ENCODE measurements at regions of chr5 and their contacts with region 1.

Region 1: DNA sequence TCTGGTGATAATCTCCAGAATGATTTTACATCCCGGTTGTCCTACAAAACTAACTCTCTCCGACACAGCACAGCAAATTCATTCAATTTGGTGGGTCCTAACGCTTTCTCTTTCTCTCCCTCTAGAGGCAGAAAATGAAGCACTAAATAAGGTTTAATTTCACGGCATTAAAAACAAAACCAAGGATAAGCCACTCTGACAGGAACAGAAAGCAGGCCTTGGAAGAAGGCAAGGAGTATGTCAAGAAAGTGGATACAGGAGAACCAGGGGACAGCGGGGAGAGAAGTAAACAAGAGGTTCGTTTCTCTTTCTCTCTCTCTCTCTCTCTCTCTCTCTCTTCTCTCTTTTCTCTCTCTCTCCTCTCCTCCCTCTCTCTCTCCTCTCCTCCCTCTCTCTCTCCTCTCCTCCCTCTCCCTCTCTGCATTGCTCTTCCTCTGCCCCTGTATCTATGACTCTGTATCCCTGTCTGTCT is 49.8 kb downstream of the EBF1 start:
- DNase-seq: no peak
- ATAC-seq: peak; percentile 51 to 57
- H3K4me3 ChIP-seq: peak overlapping the region; percentile 18 to 50 (median 32)
- H3K27ac ChIP-seq: peak overlapping the region; percentile 73 to 83 (median 79)
- H3K4me1 ChIP-seq: peaks cover 8 to 46% of the 10 kb centered on the region in 2 donors
- H3K27me3 ChIP-seq: peaks cover 0 to 8% (median 0%) of the 10 kb centered on the region in 3 donors
- CTCF ChIP-seq: peak in 3 of 5 experiments; percentile 17 to 48 (median 42)
- POLR2A ChIP-seq: no peak

Region 2: GRCh38 chr5:158875272-158875679 is 174.6 kb before region 1 on chr5:
- in situ Hi-C with region 1: no loop called
- intact Hi-C with region 1: loop called (anchors 10 kb)
- DNase-seq: no peak
- ATAC-seq: peak; percentile 24 to 39
- H3K4me3 ChIP-seq: peak overlapping the region in 3 of 4 donors; percentile 4 to 31 (median 4)
- H3K27ac ChIP-seq: peak overlapping the region; percentile 41 to 61 (median 52)
- H3K4me1 ChIP-seq: peaks cover 10 to 13% of the 10 kb centered on the region in 2 donors
- H3K27me3 ChIP-seq: no peaks in the 10 kb centered on the region
- CTCF ChIP-seq: no peak
- POLR2A ChIP-seq: no peak

Region 3: DNA sequence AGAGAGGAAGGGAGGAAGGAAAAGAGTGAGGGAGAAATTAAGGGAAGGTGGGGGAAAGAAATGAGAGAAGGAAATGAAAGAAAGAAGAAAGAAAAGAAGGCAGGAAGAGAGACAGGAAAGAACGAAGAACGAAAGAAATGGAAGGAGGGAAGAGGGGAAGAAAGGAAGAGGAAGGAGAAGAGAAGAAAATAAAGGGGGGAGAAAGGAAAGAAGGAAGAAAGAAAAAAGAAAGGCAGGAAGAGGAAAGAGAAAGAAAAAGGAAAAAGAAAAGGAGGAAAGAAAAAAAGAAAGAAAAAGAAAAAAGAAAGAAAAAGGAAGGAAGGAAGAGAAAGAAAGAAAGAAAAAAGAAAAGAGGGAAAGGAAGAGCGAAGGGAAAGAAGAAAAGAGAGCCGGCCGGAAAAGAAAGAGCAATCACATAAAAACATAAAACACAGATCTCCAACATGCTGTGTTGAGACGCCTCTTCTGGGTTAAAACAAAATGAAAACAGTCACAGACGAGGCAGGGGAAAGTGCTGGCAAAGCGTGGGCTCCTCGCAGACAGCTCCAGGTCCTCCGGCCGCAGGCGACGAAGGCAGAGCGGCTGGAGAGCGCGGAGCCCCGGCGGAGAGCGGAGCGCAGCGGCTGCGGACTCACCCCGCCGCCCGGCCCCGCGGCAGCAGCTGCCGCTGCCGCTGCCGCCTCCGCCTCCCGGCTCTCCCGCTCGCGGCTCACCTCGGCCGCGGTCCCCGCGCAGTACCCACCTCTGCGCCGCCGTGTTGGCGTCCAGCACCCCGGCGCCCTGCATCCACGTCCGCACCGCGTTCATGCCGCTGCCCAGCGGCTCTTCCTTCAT is 48.9 kb after region 1 on chr5:
- in situ Hi-C with region 1: no loop called
- intact Hi-C with region 1: loop called (anchors 5 kb)
- DNase-seq: no peak
- ATAC-seq: no peak
- H3K4me3 ChIP-seq: peak overlapping the region; percentile 47 to 81 (median 58)
- H3K27ac ChIP-seq: peak overlapping the region; percentile 79 to 85 (median 80)
- H3K4me1 ChIP-seq: peaks cover 0 to 5% of the 10 kb centered on the region in 2 donors
- H3K27me3 ChIP-seq: peaks cover 26 to 56% (median 38%) of the 10 kb centered on the region in 3 donors
- CTCF ChIP-seq: peak in 1 of 5 experiments; percentile 5
- POLR2A ChIP-seq: no peak

Measured in gastrocnemius medialis (tissue), 4 donors.